AG04450 (cell line): ENCODE measurements at regions of chr3 and their contacts with region 1.

Region 1: GRCh38 chr3:102235679-102236078 is 199.1 kb upstream of the ZPLD1 start:
- DNase-seq: no peak
- H3K4me3 ChIP-seq: no peak overlapping the region
- H3K27ac ChIP-seq: no peak overlapping the region
- H3K27me3 ChIP-seq: peaks cover 3% of the 10 kb centered on the region
- CTCF ChIP-seq: peak; percentile 69

Region 2: GRCh38 chr3:102258666-102259227 is 23.1 kb after region 1 on chr3:
- CTCF ChIA-PET with region 1: no interaction called
- POLR2A ChIA-PET with region 1: no interaction called
- DNase-seq: no peak
- H3K4me3 ChIP-seq: no peak overlapping the region
- H3K27ac ChIP-seq: no peak overlapping the region
- H3K27me3 ChIP-seq: no peaks in the 10 kb centered on the region
- CTCF ChIP-seq: no peak

Region 3: DNA sequence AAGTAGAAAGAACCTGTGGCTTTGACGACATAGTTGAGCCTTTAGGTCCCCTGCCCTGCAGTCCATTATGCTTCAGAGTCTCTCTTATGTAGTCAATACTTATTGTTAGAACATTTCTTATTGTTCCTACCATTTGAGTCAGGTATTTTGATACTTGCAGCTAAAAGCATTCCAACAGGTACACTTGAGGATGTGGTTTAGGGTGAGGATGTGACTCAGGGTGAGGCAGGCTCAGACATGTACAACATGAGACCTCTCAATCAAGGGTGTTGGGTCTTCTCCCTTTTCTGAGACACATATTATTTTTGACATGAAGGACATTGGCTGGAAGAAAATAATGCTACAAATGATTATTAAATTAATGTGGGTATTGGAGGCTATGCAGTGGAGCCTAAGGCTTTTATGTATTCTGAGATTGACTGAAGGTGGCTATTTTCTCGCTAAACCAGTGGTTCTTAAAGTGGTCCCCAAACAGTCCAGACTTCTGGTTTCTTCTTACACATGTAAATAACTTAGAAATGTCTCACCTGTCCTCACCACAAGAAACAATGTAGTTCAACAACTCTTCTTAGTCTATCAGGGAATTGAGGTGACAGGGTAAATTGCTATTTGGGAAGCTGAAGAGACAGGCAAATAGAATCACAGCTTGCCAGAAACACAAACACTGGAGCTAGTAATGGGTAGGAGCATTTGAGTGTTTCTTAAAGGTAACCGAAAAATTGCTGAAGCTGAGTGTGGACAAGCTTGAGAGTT is 63.6 kb after region 1 on chr3:
- CTCF ChIA-PET with region 1: no interaction called
- POLR2A ChIA-PET with region 1: no interaction called
- DNase-seq: no peak
- H3K4me3 ChIP-seq: no peak overlapping the region
- H3K27ac ChIP-seq: no peak overlapping the region
- H3K27me3 ChIP-seq: no peaks in the 10 kb centered on the region
- CTCF ChIP-seq: no peak

Region 4: GRCh38 chr3:102529452-102529851 is 293.8 kb after region 1 on chr3:
- CTCF ChIA-PET with region 1: interaction called, 366 read pairs
- POLR2A ChIA-PET with region 1: no interaction called
- DNase-seq: peak; percentile 3
- H3K4me3 ChIP-seq: no peak overlapping the region
- H3K27ac ChIP-seq: no peak overlapping the region
- H3K27me3 ChIP-seq: no peaks in the 10 kb centered on the region
- CTCF ChIP-seq: peak; percentile 58

Region 5: GRCh38 chr3:102536456-102536855 is 300.8 kb after region 1 on chr3:
- CTCF ChIA-PET with region 1: interaction called, 366 read pairs
- POLR2A ChIA-PET with region 1: no interaction called
- DNase-seq: peak; percentile 4
- H3K4me3 ChIP-seq: no peak overlapping the region
- H3K27ac ChIP-seq: no peak overlapping the region
- H3K27me3 ChIP-seq: no peaks in the 10 kb centered on the region
- CTCF ChIP-seq: peak; percentile 48

Region 6: DNA sequence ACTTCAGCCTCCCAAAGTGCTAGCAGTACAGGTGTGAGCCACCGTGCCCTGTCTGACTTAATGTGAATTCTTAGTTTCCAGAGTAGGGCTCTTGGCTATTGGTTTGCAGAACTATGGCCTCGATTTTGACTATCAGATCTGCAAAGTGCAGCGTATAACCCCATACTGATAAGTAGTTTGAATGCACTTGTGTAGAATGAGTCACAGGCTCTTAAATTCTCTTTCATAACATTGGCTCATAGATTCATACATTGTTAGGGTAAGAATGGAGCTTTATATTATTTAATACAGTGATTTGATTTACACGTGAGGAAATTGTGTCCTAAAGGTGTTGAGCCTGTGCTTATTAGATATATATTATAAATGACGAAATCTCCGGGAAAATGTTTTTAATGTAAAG is 309.1 kb after region 1 on chr3:
- CTCF ChIA-PET with region 1: interaction called, 366 read pairs
- POLR2A ChIA-PET with region 1: no interaction called
- DNase-seq: no peak
- H3K4me3 ChIP-seq: no peak overlapping the region
- H3K27ac ChIP-seq: no peak overlapping the region
- H3K27me3 ChIP-seq: peaks cover 2% of the 10 kb centered on the region
- CTCF ChIP-seq: no peak